Testis (tissue), 5 donors: ENCODE measurements at regions of chr3 and their contacts with region 1.

Region 1: DNA sequence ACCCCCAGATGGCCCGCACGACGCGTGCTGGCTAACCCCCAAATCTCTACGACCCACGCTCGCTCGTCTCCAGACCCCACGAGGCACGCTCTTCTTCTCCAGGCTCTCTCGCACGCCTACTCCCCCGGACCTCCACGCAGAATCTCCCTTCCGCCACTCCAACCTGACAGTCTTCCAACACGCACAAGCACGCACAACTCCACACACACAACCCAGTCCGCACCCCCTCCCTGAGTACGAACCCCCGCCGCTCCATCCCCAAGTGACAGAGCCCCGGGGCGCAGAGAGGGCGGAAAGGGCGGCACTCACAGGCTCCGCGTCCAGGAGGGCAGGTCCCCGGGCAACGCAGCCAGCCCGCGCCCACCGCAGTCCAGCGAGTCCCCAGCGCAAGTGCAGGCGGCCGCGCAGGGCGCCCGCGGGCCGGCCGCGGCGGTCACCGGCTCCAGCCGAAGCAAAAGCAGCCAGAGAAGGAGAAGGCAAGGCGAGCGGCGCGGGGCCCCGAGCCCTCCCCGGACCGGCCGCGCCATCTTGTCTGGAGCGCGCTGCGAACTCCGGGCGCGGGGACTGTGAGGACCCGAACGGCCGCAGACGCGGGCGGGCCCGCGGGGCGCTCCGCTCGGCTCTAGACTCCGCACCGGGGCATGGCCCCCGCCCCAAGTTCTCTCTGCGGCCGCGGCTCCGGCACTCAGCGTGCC is 794 bp downstream of the LRIG1 start:
- DNase-seq: peak; percentile 47
- H3K4me3 ChIP-seq: peak overlapping the region; percentile 86
- H3K27ac ChIP-seq: peak overlapping the region; percentile 86 to 95
- H3K4me1 ChIP-seq: peaks cover 19% of the 10 kb centered on the region
- H3K27me3 ChIP-seq: no peaks in the 10 kb centered on the region
- CTCF ChIP-seq: no peak
- POLR2A ChIP-seq: no peak

Region 2: DNA sequence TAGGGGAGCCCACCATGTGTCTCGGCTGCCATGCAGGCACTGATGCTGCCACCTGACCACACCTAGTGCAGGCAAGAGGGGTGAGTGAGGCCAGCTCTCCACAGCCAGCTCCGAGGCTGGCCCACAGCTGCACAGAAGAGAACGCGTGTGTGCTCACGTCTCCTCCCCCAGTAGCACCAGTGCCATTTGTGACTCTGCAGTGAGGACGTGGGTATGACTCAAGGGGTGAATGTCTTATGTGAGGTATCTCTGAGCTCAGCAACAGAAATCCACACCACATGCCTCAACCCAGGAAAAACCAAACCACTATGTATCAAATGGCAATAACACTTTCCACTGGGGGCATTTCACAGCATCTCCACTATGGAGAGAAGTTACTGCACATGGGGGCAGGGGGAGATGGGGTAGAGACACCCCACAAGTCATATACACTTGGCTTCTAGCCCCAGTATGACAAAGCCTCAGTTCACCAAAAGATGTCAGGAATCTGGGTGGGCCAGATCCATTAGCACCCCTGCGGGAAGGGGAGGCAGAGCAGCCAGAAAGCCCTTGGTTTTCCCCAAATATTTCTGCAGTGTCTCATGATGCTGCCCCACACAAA is 86.8 kb before region 1 on chr3:
- intact Hi-C with region 1: loop called (anchors 10 kb)
- DNase-seq: no peak
- H3K4me3 ChIP-seq: no peak overlapping the region
- H3K27ac ChIP-seq: no peak overlapping the region
- H3K4me1 ChIP-seq: peaks cover 28% of the 10 kb centered on the region
- H3K27me3 ChIP-seq: no peaks in the 10 kb centered on the region
- CTCF ChIP-seq: no peak
- POLR2A ChIP-seq: no peak

Region 3: DNA sequence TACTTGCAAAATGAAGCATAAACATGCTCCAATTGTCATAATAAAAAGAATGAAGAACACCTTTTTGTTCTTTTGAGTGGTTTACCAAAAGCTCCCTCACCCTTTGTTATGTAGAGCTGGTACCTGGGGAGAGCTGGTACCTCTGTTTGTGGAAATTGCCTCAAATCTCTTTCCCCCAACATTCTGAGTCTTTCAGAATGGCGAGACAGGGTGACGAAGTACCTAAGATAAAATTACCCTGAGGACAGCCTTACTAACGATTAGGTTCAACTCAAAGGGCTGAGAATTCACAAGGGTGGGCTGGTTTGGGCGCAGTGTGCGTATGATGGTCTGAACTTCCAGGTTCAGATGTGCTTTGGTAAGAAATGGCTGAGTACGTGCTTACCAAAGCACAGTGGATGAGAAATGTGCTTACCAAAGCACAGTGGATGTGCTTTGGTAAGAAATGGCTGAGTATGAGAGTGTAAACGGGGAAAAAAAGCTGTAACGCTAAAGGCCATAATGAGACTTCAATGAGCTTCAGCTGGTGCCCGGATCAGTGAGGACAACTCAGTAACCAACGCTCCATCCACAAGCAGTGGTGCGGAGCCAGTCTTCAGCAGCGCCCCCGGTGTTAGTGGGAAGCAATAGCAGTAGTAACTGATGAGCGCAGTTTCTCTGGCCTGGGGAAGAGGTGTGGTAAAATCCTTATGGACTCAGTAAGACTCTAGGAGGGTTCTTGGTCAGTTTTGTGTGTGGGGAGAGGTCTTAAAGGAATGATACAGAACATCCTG is 73.1 kb after region 1 on chr3:
- intact Hi-C with region 1: no loop called
- DNase-seq: peak; percentile 72
- H3K4me3 ChIP-seq: peak overlapping the region in 1 of 2 donors; percentile 7
- H3K27ac ChIP-seq: no peak overlapping the region
- H3K4me1 ChIP-seq: no peaks in the 10 kb centered on the region
- H3K27me3 ChIP-seq: no peaks in the 10 kb centered on the region
- CTCF ChIP-seq: peak in 1 of 3 experiments; percentile 29
- POLR2A ChIP-seq: no peak